ENCODE measurements at regions of chr10 and their contacts with region 1.

Region 1: DNA sequence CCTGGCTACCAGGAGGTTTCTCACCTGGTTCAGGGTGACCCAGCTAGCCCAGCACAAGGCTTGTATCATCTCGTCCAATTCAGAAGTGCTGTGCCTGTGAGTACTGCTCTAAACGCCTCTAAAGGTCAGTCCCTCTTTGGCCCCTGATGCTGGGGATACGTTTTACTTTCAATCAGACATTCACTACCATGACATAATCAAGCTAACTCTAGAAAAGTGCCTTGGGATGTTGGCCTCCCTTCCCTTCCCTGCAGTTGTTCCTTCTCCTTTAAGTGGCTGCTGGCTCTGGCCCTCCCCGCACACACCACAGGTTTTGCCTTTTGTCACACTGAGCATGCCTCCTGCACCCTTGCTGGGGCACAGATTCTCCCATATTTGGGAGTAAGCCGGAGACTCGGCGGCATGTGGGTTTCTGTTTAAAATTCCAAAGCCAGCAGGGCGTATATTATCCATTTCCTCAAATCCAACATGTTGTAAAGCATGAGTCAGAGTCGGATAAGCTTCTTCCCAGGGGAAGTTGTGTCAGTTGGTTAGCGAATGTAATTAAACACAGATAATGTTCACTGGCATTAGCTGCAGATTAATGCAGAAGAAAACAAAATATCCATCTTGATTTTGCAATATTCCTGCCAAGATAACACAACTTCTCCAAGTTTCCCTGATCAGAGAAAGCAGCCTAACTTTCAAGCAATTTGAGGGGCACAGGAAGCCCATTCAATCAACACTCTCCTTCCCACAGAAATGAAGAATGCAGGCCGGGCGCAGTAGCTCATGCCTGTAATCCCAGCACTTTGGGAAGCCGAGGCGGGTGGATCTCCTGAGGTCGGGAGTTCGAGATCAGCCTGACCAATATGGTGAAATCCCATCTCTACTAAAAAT is 31.8 kb upstream of the VCL start:
- DNase-seq: peak; percentile 91
- H3K4me3 ChIP-seq: peak overlapping the region in 1 of 3 experiments; percentile 10
- H3K27ac ChIP-seq: peak overlapping the region; percentile 68
- H3K4me1 ChIP-seq: peaks cover 24% of the 10 kb centered on the region
- H3K27me3 ChIP-seq: no peaks in the 10 kb centered on the region
- CTCF ChIP-seq: no peak

Region 2: DNA sequence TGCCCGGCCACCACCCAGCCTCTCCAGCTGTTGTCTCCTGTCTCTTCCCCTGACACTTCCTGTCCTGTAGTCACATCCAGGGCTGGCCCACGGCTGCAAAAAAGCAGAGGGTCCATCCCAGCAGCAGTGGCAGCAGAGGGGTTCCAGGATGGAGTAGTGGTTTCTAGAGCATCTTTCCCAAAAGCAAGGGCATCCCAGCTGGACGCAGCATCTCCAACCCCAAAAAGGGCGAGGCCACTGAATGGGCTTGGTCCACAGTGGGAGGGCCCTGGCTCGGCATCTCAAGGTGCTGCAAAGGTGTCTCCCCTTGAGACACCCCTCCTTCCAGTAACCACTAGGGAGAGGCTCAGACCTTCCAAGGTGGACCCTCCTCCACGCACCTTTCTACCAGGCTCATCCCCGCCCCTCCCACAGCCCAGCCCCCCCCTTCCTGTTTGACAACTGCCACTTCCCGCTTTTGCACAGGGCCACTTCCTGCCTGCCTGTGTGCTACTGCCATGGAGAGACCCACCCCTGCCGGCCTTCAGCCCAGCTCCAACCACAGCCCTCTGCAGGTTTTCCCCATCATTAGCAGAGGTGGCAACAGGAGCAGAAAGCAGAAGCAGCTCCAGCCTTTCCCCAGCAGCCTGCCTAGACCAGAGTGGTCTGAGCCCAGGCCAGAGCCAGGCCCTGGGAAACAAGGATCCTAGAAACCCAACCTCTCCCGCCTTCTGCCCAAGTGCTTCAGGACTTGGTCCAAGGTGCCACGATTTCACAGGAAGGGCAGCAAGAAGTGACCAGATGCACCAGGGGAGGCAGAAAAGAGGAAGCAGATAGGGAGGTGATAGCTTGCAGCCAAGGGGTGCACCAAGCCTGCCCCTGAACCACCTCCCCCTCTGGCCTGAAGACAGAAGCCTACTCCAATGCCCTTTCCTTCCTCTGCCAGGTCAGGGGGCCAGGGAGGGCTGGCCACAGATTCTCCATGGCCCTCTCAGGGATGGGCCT is 100.4 kb before region 1 on chr10:
- CTCF ChIA-PET with region 1: no interaction called
- dilution Hi-C with region 1: loop called (anchors 5 kb)
- in situ Hi-C with region 1: no loop called
- intact Hi-C with region 1: no loop called
- DNase-seq: no peak
- H3K4me3 ChIP-seq: no peak overlapping the region
- H3K27ac ChIP-seq: no peak overlapping the region
- H3K4me1 ChIP-seq: no peaks in the 10 kb centered on the region
- H3K27me3 ChIP-seq: no peaks in the 10 kb centered on the region
- CTCF ChIP-seq: no peak

Region 3: DNA sequence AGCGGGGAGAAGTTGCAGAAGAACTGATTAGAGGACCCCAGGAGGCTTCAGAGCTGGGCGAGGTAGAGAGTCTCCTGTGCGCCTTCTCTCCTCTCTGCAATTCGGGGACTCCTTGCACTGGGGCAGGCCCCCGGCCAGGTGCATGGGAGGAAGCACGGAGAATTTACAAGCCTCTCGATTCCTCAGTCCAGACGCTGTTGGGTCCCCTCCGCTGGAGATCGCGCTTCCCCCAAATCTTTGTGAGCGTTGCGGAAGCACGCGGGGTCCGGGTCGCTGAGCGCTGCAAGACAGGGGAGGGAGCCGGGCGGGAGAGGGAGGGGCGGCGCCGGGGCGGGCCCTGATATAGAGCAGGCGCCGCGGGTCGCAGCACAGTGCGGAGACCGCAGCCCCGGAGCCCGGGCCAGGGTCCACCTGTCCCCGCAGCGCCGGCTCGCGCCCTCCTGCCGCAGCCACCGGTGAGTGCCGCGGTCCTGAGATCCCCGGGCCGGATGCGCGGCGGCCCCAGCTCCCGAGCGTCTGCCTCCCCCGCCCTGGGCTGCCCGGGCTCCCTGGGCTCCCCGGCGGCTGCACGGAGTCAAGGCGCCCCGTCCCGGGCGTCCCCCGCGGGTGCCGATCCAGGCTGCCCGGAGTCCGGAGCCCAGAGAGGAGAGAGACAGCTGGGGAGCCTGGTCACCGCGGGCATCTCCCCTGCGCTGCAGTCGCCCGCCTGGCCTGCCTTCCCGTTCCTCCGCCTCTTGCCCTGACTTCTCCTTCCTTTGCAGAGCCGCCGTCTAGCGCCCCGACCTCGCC is 55.2 kb before region 1 on chr10 and contains the start of gene PLAU:
- CTCF ChIA-PET with region 1: no interaction called
- dilution Hi-C with region 1: no loop called
- in situ Hi-C with region 1: no loop called
- intact Hi-C with region 1: no loop called
- DNase-seq: peak; percentile 73
- H3K4me3 ChIP-seq: peak within 1 kb of the TSS; percentile 71 to 87 (median 87)
- H3K27ac ChIP-seq: peak within 1 kb of the TSS; percentile 90
- H3K4me1 ChIP-seq: peaks cover 76% of the 10 kb centered on the region
- H3K27me3 ChIP-seq: no peaks in the 10 kb centered on the region
- CTCF ChIP-seq: no peak
- total RNA-seq, gene PLAU: 85.7 to 712 TPM

Region 4: DNA sequence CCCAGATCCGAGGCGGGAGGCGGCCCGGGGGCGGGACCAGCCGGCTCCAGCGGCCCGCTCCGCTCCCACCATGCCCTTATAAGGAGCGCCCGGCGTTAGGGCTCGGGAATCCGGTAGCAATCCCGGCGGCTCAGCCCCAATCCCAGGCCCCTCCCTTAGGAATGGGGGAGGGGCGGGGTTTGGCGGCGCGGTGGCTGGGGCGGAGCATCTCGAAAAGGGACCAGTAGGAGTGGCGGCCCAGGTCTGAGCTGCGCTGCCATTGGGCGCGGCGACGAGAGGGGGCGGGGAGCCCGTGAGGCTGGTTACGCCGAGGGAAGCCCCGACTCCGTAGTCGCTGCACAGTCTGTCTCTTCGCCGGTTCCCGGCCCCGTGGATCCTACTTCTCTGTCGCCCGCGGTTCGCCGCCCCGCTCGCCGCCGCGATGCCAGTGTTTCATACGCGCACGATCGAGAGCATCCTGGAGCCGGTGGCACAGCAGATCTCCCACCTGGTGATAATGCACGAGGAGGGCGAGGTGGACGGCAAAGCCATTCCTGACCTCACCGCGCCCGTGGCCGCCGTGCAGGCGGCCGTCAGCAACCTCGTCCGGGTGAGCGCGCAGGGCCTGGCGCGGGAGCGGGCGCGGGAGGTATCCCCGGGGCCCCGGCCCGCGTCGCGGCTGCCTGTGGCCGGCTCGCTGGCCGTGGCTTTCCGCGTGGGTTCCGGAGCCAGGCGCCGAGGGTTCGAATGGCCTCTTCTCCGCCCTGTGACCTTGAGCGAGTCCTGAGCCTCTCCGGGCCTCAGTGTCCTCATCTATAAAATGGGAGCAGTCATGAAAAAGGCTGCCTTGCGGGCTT is 31.9 kb after region 1 on chr10 and contains the start of gene VCL:
- CTCF ChIA-PET with region 1: no interaction called
- dilution Hi-C with region 1: no loop called
- in situ Hi-C with region 1: no loop called
- intact Hi-C with region 1: loop called (anchors 2 kb)
- DNase-seq: peak; percentile 99
- H3K4me3 ChIP-seq: peak within 1 kb of the TSS; percentile 61 to 92 (median 90)
- H3K27ac ChIP-seq: peak within 1 kb of the TSS; percentile 72
- H3K4me1 ChIP-seq: peaks cover 26% of the 10 kb centered on the region
- H3K27me3 ChIP-seq: no peaks in the 10 kb centered on the region
- CTCF ChIP-seq: no peak
- total RNA-seq, gene VCL: 136 to 172 TPM

Region 5: GRCh38 chr10:74011770-74012169 is 45.6 kb after region 1 on chr10:
- CTCF ChIA-PET with region 1: no interaction called
- dilution Hi-C with region 1: loop called (anchors 5 kb)
- in situ Hi-C with region 1: no loop called
- intact Hi-C with region 1: no loop called
- DNase-seq: peak; percentile 67
- H3K4me3 ChIP-seq: no peak overlapping the region
- H3K27ac ChIP-seq: no peak overlapping the region
- H3K4me1 ChIP-seq: peaks cover 28% of the 10 kb centered on the region
- H3K27me3 ChIP-seq: no peaks in the 10 kb centered on the region
- CTCF ChIP-seq: no peak

Region 6: DNA sequence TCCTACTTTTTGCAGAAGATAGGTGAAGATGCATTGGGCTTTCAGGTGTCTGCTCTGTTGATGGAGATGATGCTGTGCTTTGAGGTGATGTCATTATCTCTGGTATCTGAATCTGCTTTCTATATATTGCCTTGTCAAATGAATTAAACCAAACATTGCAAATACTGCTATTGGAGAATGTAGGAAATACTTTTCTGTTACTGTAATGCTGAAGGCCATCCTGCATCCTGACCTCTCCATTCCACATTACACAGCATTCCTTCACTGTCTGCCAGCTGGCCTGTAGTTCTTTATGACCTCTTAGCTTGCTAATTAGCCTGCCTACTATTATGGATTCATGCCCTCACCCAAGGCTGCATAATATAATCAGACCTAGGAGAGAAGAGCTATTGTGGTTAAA is 105.0 kb after region 1 on chr10:
- CTCF ChIA-PET with region 1: no interaction called
- dilution Hi-C with region 1: loop called (anchors 5 kb)
- in situ Hi-C with region 1: no loop called
- intact Hi-C with region 1: no loop called
- DNase-seq: no peak
- H3K4me3 ChIP-seq: no peak overlapping the region
- H3K27ac ChIP-seq: no peak overlapping the region
- H3K4me1 ChIP-seq: no peaks in the 10 kb centered on the region
- H3K27me3 ChIP-seq: no peaks in the 10 kb centered on the region
- CTCF ChIP-seq: no peak

Measured in mammary epithelial cell (primary cell).